Ascending aorta (tissue), 2 donors: ENCODE measurements at regions of chr7 and their contacts with region 1.

Region 1: GRCh38 chr7:152675759-152676636 is at the start of gene XRCC2:
- DNase-seq: peak; percentile 66 to 95
- H3K4me3 ChIP-seq: peak within 1 kb of the TSS; percentile 83 to 89
- H3K27ac ChIP-seq: peak within 1 kb of the TSS; percentile 63 to 83
- H3K4me1 ChIP-seq: peaks cover 0 to 7% of the 10 kb centered on the region in 2 donors
- H3K27me3 ChIP-seq: no peaks in the 10 kb centered on the region
- CTCF ChIP-seq: no peak
- total RNA-seq, gene XRCC2: 0.11 TPM

Region 2: GRCh38 chr7:152436111-152436930 is 239.7 kb before region 1 on chr7:
- intact Hi-C with region 1: loop called (anchors 10 kb)
- DNase-seq: peak; percentile 73 to 96
- H3K4me3 ChIP-seq: peak overlapping the region; percentile 88 to 91
- H3K27ac ChIP-seq: peak overlapping the region; percentile 93 to 100
- H3K4me1 ChIP-seq: peaks cover 2 to 18% of the 10 kb centered on the region in 2 donors
- H3K27me3 ChIP-seq: no peaks in the 10 kb centered on the region
- CTCF ChIP-seq: no peak

Region 3: GRCh38 chr7:152759949-152760853 is 84.2 kb after region 1 on chr7:
- intact Hi-C with region 1: loop called (anchors 1 kb)
- DNase-seq: peak in 1 of 2 donors; percentile 65
- H3K4me3 ChIP-seq: peak overlapping the region; percentile 95 to 99
- H3K27ac ChIP-seq: peak overlapping the region; percentile 95 to 96
- H3K4me1 ChIP-seq: peaks cover 0 to 2% of the 10 kb centered on the region in 2 donors
- H3K27me3 ChIP-seq: no peaks in the 10 kb centered on the region
- CTCF ChIP-seq: no peak

Region 4: GRCh38 chr7:152933904-152934303 is 257.9 kb after region 1 on chr7:
- intact Hi-C with region 1: no loop called
- DNase-seq: no peak
- H3K4me3 ChIP-seq: no peak overlapping the region
- H3K27ac ChIP-seq: no peak overlapping the region
- H3K4me1 ChIP-seq: no peaks in the 10 kb centered on the region
- H3K27me3 ChIP-seq: no peaks in the 10 kb centered on the region
- CTCF ChIP-seq: no peak